ENCODE measurements at regions of chr11 and their contacts with region 1.

Region 1: GRCh38 chr11:93225662-93226061 is 27.9 kb upstream of the SLC36A4 start:
- DNase-seq: no peak
- H3K4me3 ChIP-seq: no peak overlapping the region
- H3K27ac ChIP-seq: no peak overlapping the region
- H3K4me1 ChIP-seq: no peaks in the 10 kb centered on the region
- H3K27me3 ChIP-seq: no peaks in the 10 kb centered on the region
- CTCF ChIP-seq: peak in 5 of 11 experiments; percentile 22 to 36 (median 26)
- POLR2A ChIP-seq: no peak

Region 2: GRCh38 chr11:92941676-92942571 is 283.7 kb before region 1 on chr11:
- intact Hi-C with region 1: loop called (anchors 5 kb)
- DNase-seq: no peak
- H3K4me3 ChIP-seq: no peak overlapping the region
- H3K27ac ChIP-seq: no peak overlapping the region
- H3K4me1 ChIP-seq: no peaks in the 10 kb centered on the region
- H3K27me3 ChIP-seq: peaks cover 0 to 14% (median 0%) of the 10 kb centered on the region in 7 donors
- CTCF ChIP-seq: peak in 9 of 11 experiments; percentile 27 to 62 (median 51)
- POLR2A ChIP-seq: no peak